ENCODE measurements at regions of chr3 and their contacts with region 1.

Region 1: DNA sequence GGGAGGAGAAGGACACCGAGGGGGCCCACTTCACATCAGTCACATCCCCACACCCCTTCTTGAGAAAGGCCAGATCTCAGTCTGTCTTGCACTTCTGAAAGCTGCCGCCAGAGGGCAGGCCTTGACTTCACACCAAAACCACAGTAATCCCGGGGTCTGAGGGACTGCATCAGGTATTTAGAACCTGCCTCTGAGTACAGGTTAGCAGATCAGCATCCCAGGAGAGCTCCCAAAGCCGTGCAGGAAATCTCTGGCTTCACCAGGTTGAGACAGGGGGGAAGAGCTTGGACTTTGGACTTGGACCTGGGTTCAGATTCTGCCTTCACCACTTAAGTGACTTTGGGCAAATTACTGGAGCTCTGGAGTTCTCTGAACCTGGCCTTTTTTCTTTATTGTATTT is 50.3 kb downstream of the LHFPL4 start:
- DNase-seq: peak; percentile 43
- H3K4me3 ChIP-seq: no peak overlapping the region
- H3K27ac ChIP-seq: no peak overlapping the region
- H3K4me1 ChIP-seq: no peaks in the 10 kb centered on the region
- H3K27me3 ChIP-seq: peaks cover 4% of the 10 kb centered on the region
- CTCF ChIP-seq: peak; percentile 65 to 77 (median 68)
- POLR2A ChIP-seq: no peak

Region 2: GRCh38 chr3:9669720-9670432 is 166.6 kb after region 1 on chr3:
- intact Hi-C with region 1: loop called (anchors 10 kb)
- DNase-seq: no peak
- H3K4me3 ChIP-seq: no peak overlapping the region
- H3K27ac ChIP-seq: no peak overlapping the region
- H3K4me1 ChIP-seq: no peaks in the 10 kb centered on the region
- H3K27me3 ChIP-seq: no peaks in the 10 kb centered on the region
- CTCF ChIP-seq: no peak
- POLR2A ChIP-seq: no peak

Measured in prostate gland (tissue), 2 donors.